ENCODE measurements at regions of chr2 and their contacts with region 1.

Region 1: DNA sequence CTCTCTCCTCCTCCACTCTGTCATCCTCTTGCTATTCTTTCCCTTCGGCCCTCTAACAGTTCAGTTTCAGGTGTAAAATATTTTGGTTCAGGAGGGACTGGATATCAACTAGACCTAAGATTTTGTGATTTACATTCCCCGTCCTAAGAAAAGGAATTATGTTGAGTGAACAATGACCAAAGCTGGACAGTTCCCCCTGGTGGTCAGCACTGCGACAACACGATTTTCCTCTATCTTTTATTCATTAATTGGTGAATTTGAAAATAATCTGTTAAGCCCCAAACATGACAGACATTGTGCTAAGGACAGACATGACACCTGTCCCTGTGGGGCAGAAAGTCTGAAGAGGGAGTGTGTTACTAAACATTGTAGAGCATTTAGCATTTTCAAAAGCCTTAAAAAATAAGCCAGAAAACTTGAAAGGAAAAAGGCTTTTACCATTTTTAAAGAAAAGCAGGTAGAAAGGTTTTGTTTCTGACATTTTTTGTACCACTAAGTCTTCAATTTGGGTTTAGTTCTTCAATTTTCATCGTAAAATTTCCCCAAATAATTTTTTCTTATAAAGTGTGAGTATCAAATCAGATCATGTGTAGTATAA is 28.4 kb upstream of the GTF2A1L start:
- DNase-seq: peak; percentile 72
- H3K4me3 ChIP-seq: no peak overlapping the region
- H3K27ac ChIP-seq: no peak overlapping the region
- H3K4me1 ChIP-seq: no peaks in the 10 kb centered on the region
- H3K27me3 ChIP-seq: no peaks in the 10 kb centered on the region
- CTCF ChIP-seq: peak; percentile 71
- POLR2A ChIP-seq: no peak

Region 2: DNA sequence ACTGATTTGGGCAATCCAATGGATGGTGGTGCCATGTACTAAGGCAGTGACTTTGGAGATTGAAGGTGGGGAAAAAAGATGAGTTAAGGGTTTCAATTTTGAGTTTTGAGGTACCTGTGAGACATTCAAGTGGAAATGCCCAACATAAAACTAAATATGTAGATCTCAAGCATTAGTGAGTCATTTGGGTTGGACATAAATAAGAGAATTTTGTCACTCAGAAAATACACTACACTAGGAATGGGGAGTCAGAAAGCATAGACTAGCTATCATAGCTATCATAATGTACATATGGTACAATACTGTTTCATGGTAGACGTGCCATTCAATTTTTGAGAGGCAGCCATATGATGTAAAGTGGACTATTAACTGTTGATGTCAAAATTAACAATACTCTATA is 739.1 kb before region 1 on chr2:
- CTCF ChIA-PET with region 1: no interaction called
- POLR2A ChIA-PET with region 1: no interaction called
- dilution Hi-C with region 1: no loop called
- intact Hi-C with region 1: loop called (anchors 10 kb)
- DNase-seq: no peak
- H3K4me3 ChIP-seq: no peak overlapping the region
- H3K27ac ChIP-seq: no peak overlapping the region
- H3K4me1 ChIP-seq: no peaks in the 10 kb centered on the region
- H3K27me3 ChIP-seq: no peaks in the 10 kb centered on the region
- CTCF ChIP-seq: no peak
- POLR2A ChIP-seq: no peak

Region 3: DNA sequence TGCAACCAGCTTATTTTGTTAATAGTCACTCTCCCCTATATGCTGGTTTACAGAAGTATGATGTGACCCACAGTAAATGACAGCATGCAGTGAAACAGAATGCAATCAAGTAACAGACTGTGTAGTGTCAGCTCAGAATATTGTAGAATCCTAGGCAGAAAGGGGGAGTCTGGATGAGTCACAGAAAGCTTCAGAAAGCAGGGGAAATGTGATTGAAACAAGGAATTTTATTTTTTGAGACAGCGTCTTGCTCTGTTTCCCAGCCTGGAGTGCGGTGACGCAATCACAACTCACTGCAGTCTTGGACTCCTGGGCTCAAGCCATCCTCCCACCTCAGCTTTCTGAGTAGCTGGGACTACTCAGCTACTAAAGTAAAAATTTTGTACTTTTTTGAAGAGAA is 463.1 kb before region 1 on chr2:
- CTCF ChIA-PET with region 1: no interaction called
- POLR2A ChIA-PET with region 1: no interaction called
- dilution Hi-C with region 1: no loop called
- intact Hi-C with region 1: no loop called
- DNase-seq: no peak
- H3K4me3 ChIP-seq: no peak overlapping the region
- H3K27ac ChIP-seq: no peak overlapping the region
- H3K4me1 ChIP-seq: no peaks in the 10 kb centered on the region
- H3K27me3 ChIP-seq: peaks cover 0 to 10% of the 10 kb centered on the region in 2 experiments
- CTCF ChIP-seq: no peak
- POLR2A ChIP-seq: no peak

Region 4: GRCh38 chr2:48420512-48421197 is 168.6 kb before region 1 on chr2:
- CTCF ChIA-PET with region 1: interaction called, 9 read pairs
- POLR2A ChIA-PET with region 1: no interaction called
- dilution Hi-C with region 1: no loop called
- intact Hi-C with region 1: loop called (anchors 1 kb)
- DNase-seq: peak; percentile 85
- H3K4me3 ChIP-seq: peak overlapping the region in 1 of 3 experiments; percentile 8
- H3K27ac ChIP-seq: peak overlapping the region; percentile 39
- H3K4me1 ChIP-seq: peaks cover 5% of the 10 kb centered on the region
- H3K27me3 ChIP-seq: no peaks in the 10 kb centered on the region
- CTCF ChIP-seq: peak; percentile 88 to 93
- POLR2A ChIP-seq: no peak

Region 5: DNA sequence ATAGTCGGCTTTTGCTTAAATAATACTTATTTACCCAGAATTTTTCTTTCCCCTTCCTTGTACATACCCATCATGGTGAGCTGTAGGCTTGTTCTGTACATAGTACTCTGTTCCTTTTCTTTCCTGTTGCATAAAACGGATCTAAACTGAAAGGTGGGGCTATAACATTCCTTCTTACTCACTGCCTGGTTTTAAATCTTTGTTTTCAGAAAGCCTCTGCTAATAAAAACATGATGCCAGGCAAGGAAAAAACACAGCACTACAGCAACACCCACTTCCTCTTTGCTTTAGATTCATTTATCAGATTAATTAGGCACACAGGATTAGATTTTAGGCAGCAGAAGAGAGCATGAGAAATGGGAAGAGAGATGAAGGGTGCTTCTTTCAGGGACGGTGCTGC is 78.9 kb before region 1 on chr2:
- CTCF ChIA-PET with region 1: interaction called, 3 read pairs
- POLR2A ChIA-PET with region 1: no interaction called
- dilution Hi-C with region 1: no loop called
- intact Hi-C with region 1: loop called (anchors 2 kb)
- DNase-seq: peak; percentile 85
- H3K4me3 ChIP-seq: peak overlapping the region in 1 of 3 experiments; percentile 20
- H3K27ac ChIP-seq: peak overlapping the region; percentile 76
- H3K4me1 ChIP-seq: peaks cover 27% of the 10 kb centered on the region
- H3K27me3 ChIP-seq: no peaks in the 10 kb centered on the region
- CTCF ChIP-seq: no peak
- POLR2A ChIP-seq: no peak

Region 6: DNA sequence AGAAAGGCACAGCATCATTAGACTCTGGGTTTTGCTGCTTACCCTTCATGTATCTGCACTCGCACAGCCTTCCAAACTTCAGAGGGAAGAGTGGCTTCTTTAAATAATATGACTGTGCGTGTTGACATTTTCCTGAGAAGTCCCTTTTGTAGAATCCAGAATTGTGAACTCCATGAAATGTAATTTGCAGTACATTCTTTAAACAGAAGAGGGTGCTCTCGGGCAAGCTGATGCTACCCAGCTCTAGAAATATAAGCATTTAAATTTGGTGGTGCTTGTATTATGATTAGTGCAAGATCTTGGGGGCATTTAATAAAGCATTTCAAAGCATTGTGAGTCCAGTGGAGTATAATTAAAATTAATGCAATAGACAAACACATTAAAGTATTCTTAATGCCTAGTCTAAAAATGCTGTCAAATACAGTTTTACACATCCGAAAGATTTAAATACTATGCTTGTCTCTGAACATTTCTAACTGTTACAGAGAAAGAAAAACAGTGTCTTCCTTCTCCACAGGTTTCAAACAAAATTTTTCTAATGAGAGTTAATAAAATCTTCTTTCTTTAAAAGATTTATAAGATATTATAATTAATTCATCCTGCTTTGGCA is 11.0 kb after region 1 on chr2:
- CTCF ChIA-PET with region 1: interaction called, 12 read pairs
- POLR2A ChIA-PET with region 1: no interaction called
- dilution Hi-C with region 1: no loop called
- intact Hi-C with region 1: no loop called
- DNase-seq: peak; percentile 78
- H3K4me3 ChIP-seq: no peak overlapping the region
- H3K27ac ChIP-seq: no peak overlapping the region
- H3K4me1 ChIP-seq: no peaks in the 10 kb centered on the region
- H3K27me3 ChIP-seq: no peaks in the 10 kb centered on the region
- CTCF ChIP-seq: peak; percentile 43 to 61
- POLR2A ChIP-seq: no peak

Measured in endothelial cell of umbilical vein (primary cell).